PC-3 (cell line): ENCODE measurements at regions of chr20 and their contacts with region 1.

Region 1: GRCh38 chr20:51934301-51935002 is 132.1 kb upstream of the SALL4 start:
- DNase-seq: peak; percentile 82
- ATAC-seq: peak; percentile 81
- H3K4me3 ChIP-seq: peak overlapping the region; percentile 52
- H3K27ac ChIP-seq: no peak overlapping the region
- H3K4me1 ChIP-seq: peaks cover 38% of the 10 kb centered on the region
- H3K27me3 ChIP-seq: no peaks in the 10 kb centered on the region
- CTCF ChIP-seq: no peak

Region 2: GRCh38 chr20:51946586-51946985 is 12.1 kb after region 1 on chr20:
- CTCF ChIA-PET with region 1: no interaction called
- POLR2A ChIA-PET with region 1: interaction called, 10 read pairs
- intact Hi-C with region 1: no loop called
- DNase-seq: no peak
- ATAC-seq: no peak
- H3K4me3 ChIP-seq: no peak overlapping the region
- H3K27ac ChIP-seq: no peak overlapping the region
- H3K4me1 ChIP-seq: no peaks in the 10 kb centered on the region
- H3K27me3 ChIP-seq: no peaks in the 10 kb centered on the region
- CTCF ChIP-seq: no peak

Region 3: GRCh38 chr20:52001999-52002666 is 67.7 kb after region 1 on chr20:
- CTCF ChIA-PET with region 1: no interaction called
- POLR2A ChIA-PET with region 1: no interaction called
- intact Hi-C with region 1: no loop called
- DNase-seq: peak; percentile 79
- ATAC-seq: peak; percentile 97
- H3K4me3 ChIP-seq: peak overlapping the region; percentile 42
- H3K27ac ChIP-seq: 0 out of 2 replicates have a peak overlapping the region, but pooled peaks have one; percentile 0
- H3K4me1 ChIP-seq: peaks cover 7% of the 10 kb centered on the region
- H3K27me3 ChIP-seq: no peaks in the 10 kb centered on the region
- CTCF ChIP-seq: peak; percentile 49

Region 4: GRCh38 chr20:52025938-52026337 is 91.5 kb after region 1 on chr20:
- CTCF ChIA-PET with region 1: no interaction called
- POLR2A ChIA-PET with region 1: interaction called, 10 read pairs
- intact Hi-C with region 1: no loop called
- DNase-seq: no peak
- ATAC-seq: no peak
- H3K4me3 ChIP-seq: no peak overlapping the region
- H3K27ac ChIP-seq: no peak overlapping the region
- H3K4me1 ChIP-seq: no peaks in the 10 kb centered on the region
- H3K27me3 ChIP-seq: no peaks in the 10 kb centered on the region
- CTCF ChIP-seq: no peak